ENCODE measurements at regions of chr6 and their contacts with region 1.

Region 1: DNA sequence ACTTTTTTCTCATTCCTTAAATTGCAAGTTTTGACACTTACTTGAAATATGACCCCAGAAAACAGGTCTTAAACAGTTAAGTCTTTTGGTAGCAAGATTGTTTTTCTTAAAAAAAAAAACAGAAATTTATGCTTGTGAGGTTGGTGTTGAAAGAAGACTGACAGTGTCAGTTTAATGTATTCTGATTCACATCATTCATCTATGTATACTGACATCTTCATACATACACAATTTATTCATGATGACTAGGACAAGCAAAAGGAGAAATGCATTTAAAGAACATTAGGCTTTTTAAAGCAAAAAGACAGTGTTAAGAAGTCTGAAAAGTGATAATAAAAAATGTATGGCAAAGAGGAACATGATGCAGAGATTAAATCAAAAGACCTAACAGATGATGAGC is 27.0 kb downstream of the MCHR2 start:
- DNase-seq: no peak
- H3K4me3 ChIP-seq: no peak overlapping the region
- H3K27ac ChIP-seq: no peak overlapping the region
- H3K4me1 ChIP-seq: no peaks in the 10 kb centered on the region
- H3K27me3 ChIP-seq: no peaks in the 10 kb centered on the region
- CTCF ChIP-seq: no peak
- EP300 ChIP-seq: no peak
- POLR2A ChIP-seq: no peak

Region 2: GRCh38 chr6:99905209-99906106 is 61.6 kb before region 1 on chr6:
- in situ Hi-C with region 1: no loop called
- intact Hi-C with region 1: loop called (anchors 1 kb)
- DNase-seq: no peak
- H3K4me3 ChIP-seq: no peak overlapping the region
- H3K27ac ChIP-seq: no peak overlapping the region
- H3K4me1 ChIP-seq: no peaks in the 10 kb centered on the region
- H3K27me3 ChIP-seq: no peaks in the 10 kb centered on the region
- CTCF ChIP-seq: peak in 4 of 5 experiments; percentile 16 to 41 (median 33)
- EP300 ChIP-seq: no peak
- POLR2A ChIP-seq: no peak

Region 3: DNA sequence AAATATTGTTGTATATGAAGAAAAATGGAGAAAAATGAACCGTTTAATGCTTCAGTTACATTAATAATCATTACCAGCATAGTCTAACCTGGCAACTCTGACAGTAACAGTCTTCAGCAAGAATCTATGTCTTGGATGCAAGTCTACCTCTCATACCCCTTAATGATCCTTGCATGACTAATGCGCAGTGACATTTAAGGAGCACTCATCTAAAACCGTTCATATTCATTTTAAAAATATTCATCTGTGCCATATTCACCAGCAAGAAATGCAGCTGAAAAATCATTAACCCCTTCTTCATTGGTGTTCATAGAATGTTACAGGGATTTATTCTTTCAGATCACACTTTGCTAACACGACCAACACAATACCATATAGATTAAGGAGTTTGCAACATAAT is 1141.2 kb after region 1 on chr6:
- in situ Hi-C with region 1: no loop called
- intact Hi-C with region 1: no loop called
- DNase-seq: no peak
- H3K4me3 ChIP-seq: no peak overlapping the region
- H3K27ac ChIP-seq: no peak overlapping the region
- H3K4me1 ChIP-seq: no peaks in the 10 kb centered on the region
- H3K27me3 ChIP-seq: no peaks in the 10 kb centered on the region
- CTCF ChIP-seq: no peak
- EP300 ChIP-seq: no peak
- POLR2A ChIP-seq: no peak

Measured in transverse colon (tissue), 4 donors.